Left colon (tissue), 2 donors: ENCODE measurements at regions of chr3 and their contacts with region 1.

Region 1: DNA sequence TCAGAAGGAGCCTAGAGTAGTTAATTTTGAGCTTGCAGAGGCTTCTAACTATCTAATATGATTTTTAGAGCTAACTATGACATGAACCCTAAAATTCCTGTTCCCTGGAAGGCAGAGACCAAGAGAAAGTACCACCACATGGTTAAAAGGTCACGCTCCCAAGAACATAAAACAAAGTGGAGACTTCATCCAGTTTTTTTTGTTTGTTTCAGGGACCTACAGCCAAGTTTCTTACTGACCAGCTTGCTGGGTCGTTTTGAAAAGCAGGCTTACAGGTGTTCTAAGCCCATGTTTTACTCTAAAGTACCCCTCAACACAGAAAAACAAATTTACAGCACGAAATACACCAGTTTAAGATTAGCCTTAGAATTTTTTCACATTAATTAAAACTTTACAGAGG is 39.6 kb upstream of the SKIL start:
- DNase-seq: no peak
- ATAC-seq: no peak

Region 2: DNA sequence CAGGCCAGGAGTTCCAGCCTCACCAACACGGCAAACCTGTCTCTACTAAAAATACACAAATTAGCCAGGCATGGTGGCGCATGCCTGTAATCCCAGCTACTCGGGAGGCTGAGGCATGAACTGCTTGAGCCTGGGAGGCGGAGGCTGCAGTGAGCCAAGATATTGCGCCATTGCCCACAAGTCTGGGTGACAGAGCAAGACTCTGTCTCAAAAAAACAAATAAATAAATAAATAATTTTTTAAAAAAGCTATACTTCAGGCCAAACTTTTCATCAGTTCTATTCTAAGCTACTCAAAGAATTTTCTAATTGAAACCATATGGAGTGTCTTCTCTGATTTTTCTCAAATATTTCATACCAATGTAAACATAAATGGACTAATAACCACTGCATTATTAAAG is 180.0 kb before region 1 on chr3:
- intact Hi-C with region 1: no loop called
- DNase-seq: no peak
- ATAC-seq: no peak

Region 3: GRCh38 chr3:170196833-170197232 is 121.1 kb before region 1 on chr3:
- intact Hi-C with region 1: no loop called
- DNase-seq: no peak
- ATAC-seq: no peak

Region 4: GRCh38 chr3:170368921-170369320 is 51.0 kb after region 1 on chr3:
- intact Hi-C with region 1: loop called in 1 of 2 experiments (anchors 10 kb)
- DNase-seq: no peak
- ATAC-seq: no peak

Region 5: GRCh38 chr3:170405101-170405500 is 87.1 kb after region 1 on chr3:
- intact Hi-C with region 1: loop called in 1 of 2 experiments (anchors 10 kb)
- DNase-seq: no peak
- ATAC-seq: no peak

Region 6: DNA sequence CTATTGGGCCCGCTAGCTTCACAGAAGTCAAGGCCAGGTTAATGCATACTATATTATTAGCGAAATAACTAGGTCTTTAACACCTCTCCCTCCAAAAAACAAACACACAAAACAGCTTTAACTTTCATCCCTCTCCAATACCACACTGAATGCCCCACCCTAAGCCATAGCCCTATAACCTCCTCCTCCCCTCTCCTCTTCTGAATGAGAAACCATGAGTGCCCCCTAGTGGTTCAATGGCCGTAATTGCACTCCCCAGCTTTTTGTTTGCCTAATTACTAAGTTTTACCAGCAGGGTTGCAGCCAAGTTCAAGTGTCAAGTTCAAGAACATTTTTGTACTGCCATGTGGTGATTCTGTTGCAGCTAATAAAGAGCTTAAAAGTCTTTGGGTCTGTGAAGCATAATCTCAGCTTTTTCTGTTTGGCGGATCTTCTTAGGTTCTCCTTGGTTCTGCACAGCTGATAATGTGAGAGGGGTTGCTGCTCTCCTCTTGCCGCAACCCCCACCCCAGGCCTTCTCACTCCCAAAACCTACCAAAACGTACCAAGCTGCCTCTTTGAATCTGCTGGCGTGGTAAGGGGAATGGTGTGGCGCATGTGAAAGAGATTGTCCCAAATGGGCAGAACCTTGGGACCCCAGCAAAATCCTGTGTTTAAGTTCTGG is 494.1 kb after region 1 on chr3:
- intact Hi-C with region 1: loop called in 1 of 2 experiments (anchors 10 kb)
- DNase-seq: peak; percentile 45 to 58
- ATAC-seq: peak; percentile 52